Dorsolateral prefrontal cortex (tissue), 120 donors: ENCODE measurements at regions of chr6 and their contacts with region 1.

Region 1: GRCh38 chr6:139375232-139376016 is 976 bp upstream of the CITED2 start:
- DNase-seq: peak; percentile 67 to 93 (median 86)
- H3K4me3 ChIP-seq: peak overlapping the region; percentile 60 to 98 (median 87)
- H3K27ac ChIP-seq: peak overlapping the region; percentile 25 to 99 (median 96)
- H3K27me3 ChIP-seq: no peaks in the 10 kb centered on the region
- CTCF ChIP-seq: peak in 3 of 56 donors; percentile 2 to 20 (median 4)

Region 2: DNA sequence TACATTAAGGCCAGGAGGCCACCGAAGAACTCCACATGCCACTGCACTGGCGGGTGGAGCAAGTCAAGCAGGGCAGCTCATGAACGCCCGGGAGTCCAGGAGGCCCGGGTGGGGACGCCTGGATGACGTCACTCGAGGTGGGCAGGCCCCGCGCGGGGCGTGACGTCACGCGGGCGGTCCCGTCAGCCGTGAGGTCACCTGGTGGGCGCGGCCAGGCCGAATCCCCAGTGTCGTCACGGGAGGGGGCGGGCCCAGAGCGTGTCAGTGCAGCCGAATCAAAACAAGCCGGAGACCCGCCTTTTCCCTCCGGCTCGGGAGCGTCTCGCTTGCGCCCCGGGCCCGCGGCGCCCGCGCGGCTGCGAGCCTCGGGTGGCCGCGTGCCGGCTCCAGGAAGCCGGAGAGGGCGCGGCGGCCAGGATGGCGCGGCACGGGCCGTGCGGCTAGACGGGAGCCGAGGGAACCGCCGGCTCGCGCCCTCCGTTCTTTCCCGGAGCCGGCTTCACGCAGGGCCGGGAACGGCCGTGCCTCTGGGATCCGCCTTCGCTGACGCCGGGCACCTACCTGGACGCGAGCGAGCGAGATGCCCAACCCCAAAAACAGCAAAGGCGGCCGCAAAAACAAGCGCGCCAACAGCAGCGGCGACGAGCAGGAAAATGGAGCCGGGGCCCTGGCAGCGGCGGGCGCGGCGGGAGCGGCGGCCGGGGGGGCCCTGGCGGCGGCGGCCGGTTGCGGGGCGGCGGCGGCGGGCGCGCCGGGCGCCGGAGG is 240.4 kb before region 1 on chr6 and contains the start of gene HECA:
- intact Hi-C with region 1: loop called in 1 of 2 experiments (anchors 10 kb)
- DNase-seq: peak; percentile 93 to 98 (median 97)
- H3K4me3 ChIP-seq: peak within 1 kb of the TSS; percentile 57 to 88 (median 79)
- H3K27ac ChIP-seq: peak within 1 kb of the TSS in 57 of 59 donors; percentile 45 to 97 (median 88)
- H3K27me3 ChIP-seq: no peaks in the 10 kb centered on the region
- CTCF ChIP-seq: peak in 2 of 56 donors; percentile 10 to 17
- total RNA-seq, gene HECA: 19.3 to 43.8 (median 30.8) TPM

Region 3: DNA sequence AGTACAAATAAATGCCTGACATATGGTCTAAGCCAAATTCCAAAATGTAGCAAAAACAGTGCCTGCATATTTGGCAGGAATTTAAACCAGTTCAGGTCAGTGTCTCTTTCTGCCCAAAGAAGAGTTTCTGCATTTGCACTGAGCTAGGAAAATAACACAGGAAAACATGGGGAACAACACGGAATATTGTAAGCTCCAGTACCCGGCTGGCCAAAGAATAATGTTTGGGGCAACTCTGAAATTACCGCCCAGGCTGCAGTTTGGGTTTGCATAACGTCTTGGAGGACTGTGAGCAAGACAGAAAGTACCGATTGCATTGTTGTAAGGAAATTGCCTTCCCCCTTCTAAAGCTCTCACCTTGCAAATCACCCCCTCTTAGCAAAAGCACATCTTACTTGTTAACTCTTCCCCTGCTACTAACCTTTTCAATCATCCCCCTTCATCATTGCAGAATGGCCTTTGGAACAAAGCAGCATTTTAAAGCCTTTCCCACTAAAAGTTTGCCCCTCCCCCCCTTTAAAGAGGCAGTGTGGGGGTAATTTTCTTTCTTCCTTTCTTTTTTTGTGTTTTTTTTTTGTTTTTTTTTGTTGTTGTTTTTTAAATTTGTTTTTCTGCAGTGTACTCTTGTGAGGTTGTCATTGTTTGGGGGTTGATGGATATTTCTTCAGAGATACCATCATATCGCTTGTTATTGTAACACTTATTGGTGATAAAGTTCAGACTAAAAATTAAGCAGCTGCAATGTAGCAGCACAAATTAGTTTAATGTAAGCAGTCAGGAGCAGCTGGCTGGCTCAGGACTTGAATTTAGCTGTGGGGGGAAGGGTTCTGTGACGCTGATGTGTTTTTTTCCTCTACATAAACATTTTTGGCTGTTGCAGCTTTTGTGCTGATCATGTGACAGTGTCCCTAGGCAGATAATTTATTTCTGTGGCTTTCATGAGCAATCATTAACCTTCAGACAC is 99.0 kb after region 1 on chr6:
- intact Hi-C with region 1: loop called in 1 of 2 experiments (anchors 10 kb)
- DNase-seq: peak in 1 of 10 donors; percentile 31
- H3K4me3 ChIP-seq: peak overlapping the region in 48 of 59 donors; percentile 1 to 48 (median 28)
- H3K27ac ChIP-seq: peak overlapping the region in 30 of 59 donors; percentile 1 to 84 (median 32)
- H3K27me3 ChIP-seq: no peaks in the 10 kb centered on the region
- CTCF ChIP-seq: no peak

Region 4: GRCh38 chr6:139597771-139598755 is 222.6 kb after region 1 on chr6:
- intact Hi-C with region 1: loop called in 1 of 2 experiments (anchors 5 kb)
- DNase-seq: peak in 8 of 10 donors; percentile 40 to 67 (median 54)
- H3K4me3 ChIP-seq: no peak overlapping the region
- H3K27ac ChIP-seq: peak overlapping the region in 54 of 59 donors; percentile 4 to 85 (median 58)
- H3K27me3 ChIP-seq: no peaks in the 10 kb centered on the region
- CTCF ChIP-seq: no peak

Region 5: DNA sequence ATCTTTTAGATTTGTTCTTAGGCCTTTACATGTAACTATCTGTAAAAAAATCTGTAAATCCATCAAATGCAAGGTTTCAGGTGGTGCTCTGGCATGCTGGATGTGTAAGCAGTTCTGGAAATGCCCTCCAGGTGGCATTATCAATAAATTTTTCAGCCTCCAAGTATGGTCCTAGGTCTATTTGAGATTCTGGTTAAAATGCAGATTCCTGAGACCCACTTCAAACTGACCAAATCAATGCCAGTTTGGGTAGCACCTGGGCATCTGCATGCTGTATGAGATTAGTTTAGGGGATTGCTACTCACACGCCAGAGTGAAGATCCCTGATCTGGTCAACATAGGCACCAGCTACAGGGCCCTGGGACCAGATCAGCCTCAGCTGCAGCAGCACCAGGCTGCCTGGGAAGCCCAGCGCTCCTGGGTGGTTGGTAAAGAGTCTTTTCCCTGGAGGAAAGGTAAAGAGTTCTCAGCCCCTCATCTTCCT is 506.3 kb after region 1 on chr6:
- intact Hi-C with region 1: loop called (anchors 5 to 10 kb)
- DNase-seq: peak in 1 of 10 donors; percentile 31
- H3K4me3 ChIP-seq: peak overlapping the region in 5 of 59 donors; percentile 2 to 22 (median 7)
- H3K27ac ChIP-seq: peak overlapping the region in 31 of 59 donors; percentile 2 to 77 (median 47)
- H3K27me3 ChIP-seq: peaks cover 0 to 4% (median 0%) of the 10 kb centered on the region in 45 donors
- CTCF ChIP-seq: peak; percentile 20 to 74 (median 62)

Region 6: GRCh38 chr6:139920027-139920775 is 544.8 kb after region 1 on chr6:
- intact Hi-C with region 1: no loop called
- DNase-seq: no peak
- H3K4me3 ChIP-seq: no peak overlapping the region
- H3K27ac ChIP-seq: peak overlapping the region in 4 of 59 donors; percentile 19 to 30 (median 26)
- H3K27me3 ChIP-seq: peaks cover 0 to 10% (median 0%) of the 10 kb centered on the region in 45 donors
- CTCF ChIP-seq: no peak

Region 7: GRCh38 chr6:140124498-140124897 is 749.1 kb after region 1 on chr6:
- intact Hi-C with region 1: no loop called
- DNase-seq: no peak
- H3K4me3 ChIP-seq: no peak overlapping the region
- H3K27ac ChIP-seq: no peak overlapping the region
- H3K27me3 ChIP-seq: no peaks in the 10 kb centered on the region
- CTCF ChIP-seq: no peak